A549 (cell line): ENCODE measurements at regions of chr12 and their contacts with region 1.

Region 1: GRCh38 chr12:114476159-114476558 is 70.2 kb upstream of the TBX5 start:
- DNase-seq: peak in 1 of 2 experiments; percentile 49
- ATAC-seq: peak; percentile 48 to 78; a peak in 4 of 6 replicates
- H3K4me3 ChIP-seq: no peak overlapping the region
- H3K27ac ChIP-seq: no peak overlapping the region
- H3K4me1 ChIP-seq: 0 out of 3 replicates have a peak, but pooled peaks cover 6% of the 10 kb centered on the region
- CTCF ChIP-seq: peak; percentile 56
- EP300 ChIP-seq: no peak
- POLR2A ChIP-seq: no peak
- RAD21 ChIP-seq: peak; percentile 55 to 66

Region 2: GRCh38 chr12:113965951-113966797 is 510.0 kb before region 1 on chr12 and contains the start of gene RBM19:
- CTCF ChIA-PET with region 1: interaction called, 10 read pairs
- POLR2A ChIA-PET with region 1: no interaction called
- DNase-seq: peak; percentile 97 to 98
- ATAC-seq: peak; percentile 89 to 98
- H3K4me3 ChIP-seq: peak within 1 kb of the TSS; percentile 62
- H3K27ac ChIP-seq: peak within 1 kb of the TSS; percentile 64 to 87
- H3K4me1 ChIP-seq: peaks cover 11% of the 10 kb centered on the region; the same call in 2 of the 3 replicates
- CTCF ChIP-seq: peak; percentile 89
- EP300 ChIP-seq: no peak
- POLR2A ChIP-seq: peak; percentile 77
- RAD21 ChIP-seq: peak; percentile 52 to 61
- polyA plus RNA-seq, gene RBM19: 14.9 and 16.0 TPM in 2 replicates

Region 3: GRCh38 chr12:114166362-114166761 is 309.8 kb before region 1 on chr12:
- CTCF ChIA-PET with region 1: interaction called, 10 read pairs
- POLR2A ChIA-PET with region 1: no interaction called
- DNase-seq: peak; percentile 22 to 49
- ATAC-seq: peak in 1 of 2 experiments; percentile 78; a peak in 3 of 6 replicates
- H3K4me3 ChIP-seq: no peak overlapping the region
- H3K27ac ChIP-seq: no peak overlapping the region
- H3K4me1 ChIP-seq: no peaks in the 10 kb centered on the region
- CTCF ChIP-seq: peak; percentile 29
- EP300 ChIP-seq: no peak
- POLR2A ChIP-seq: no peak
- RAD21 ChIP-seq: peak; percentile 46 to 65; a peak in 4 of 5 replicates

Region 4: DNA sequence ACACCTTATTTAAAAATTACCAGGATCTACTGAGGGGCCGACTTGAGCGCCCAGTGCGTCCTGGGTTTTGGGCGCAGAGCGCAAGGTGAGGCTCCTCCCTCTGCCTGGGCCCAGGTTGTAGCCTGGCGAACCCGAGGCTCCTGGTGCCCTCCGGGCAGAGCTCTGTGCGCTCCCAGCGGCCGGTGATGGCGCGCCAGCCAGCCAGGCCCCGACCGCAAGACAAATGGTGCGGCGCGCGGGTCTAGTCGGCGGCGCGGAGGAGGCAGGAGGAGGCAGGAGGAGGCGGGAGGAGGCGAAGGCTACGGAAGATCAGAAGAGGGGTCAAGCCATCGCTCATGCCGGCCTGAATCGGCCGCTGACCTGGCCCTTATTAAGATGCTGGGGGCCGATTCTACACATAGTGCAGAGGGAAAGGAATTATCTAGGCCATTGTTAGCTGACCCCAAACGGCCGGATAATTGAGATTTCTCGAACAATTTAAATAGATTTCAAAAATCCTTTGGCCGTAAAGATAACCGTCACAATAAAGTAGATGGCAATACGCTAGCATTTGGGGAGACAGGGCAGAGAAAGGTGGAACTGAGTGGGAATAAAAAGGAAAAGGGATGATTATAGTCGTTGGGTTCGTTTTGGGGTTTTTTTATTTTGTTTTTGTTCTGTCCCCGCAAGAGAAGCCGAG is 73.0 kb before region 1 on chr12:
- CTCF ChIA-PET with region 1: no interaction called
- POLR2A ChIA-PET with region 1: no interaction called
- DNase-seq: no peak
- ATAC-seq: peak; percentile 39 to 48; a peak in 2 of 6 replicates
- H3K4me3 ChIP-seq: no peak overlapping the region
- H3K27ac ChIP-seq: no peak overlapping the region
- H3K4me1 ChIP-seq: no peaks in the 10 kb centered on the region
- CTCF ChIP-seq: no peak
- EP300 ChIP-seq: no peak
- POLR2A ChIP-seq: no peak
- RAD21 ChIP-seq: no peak

Region 5: GRCh38 chr12:114491916-114492315 is 15.8 kb after region 1 on chr12:
- CTCF ChIA-PET with region 1: interaction called, 10 read pairs
- POLR2A ChIA-PET with region 1: no interaction called
- DNase-seq: no peak
- ATAC-seq: no peak
- H3K4me3 ChIP-seq: no peak overlapping the region
- H3K27ac ChIP-seq: no peak overlapping the region
- H3K4me1 ChIP-seq: no peaks in the 10 kb centered on the region
- CTCF ChIP-seq: no peak
- EP300 ChIP-seq: no peak
- POLR2A ChIP-seq: no peak
- RAD21 ChIP-seq: no peak